ENCODE measurements at regions of chr15 and their contacts with region 1.

Region 1: DNA sequence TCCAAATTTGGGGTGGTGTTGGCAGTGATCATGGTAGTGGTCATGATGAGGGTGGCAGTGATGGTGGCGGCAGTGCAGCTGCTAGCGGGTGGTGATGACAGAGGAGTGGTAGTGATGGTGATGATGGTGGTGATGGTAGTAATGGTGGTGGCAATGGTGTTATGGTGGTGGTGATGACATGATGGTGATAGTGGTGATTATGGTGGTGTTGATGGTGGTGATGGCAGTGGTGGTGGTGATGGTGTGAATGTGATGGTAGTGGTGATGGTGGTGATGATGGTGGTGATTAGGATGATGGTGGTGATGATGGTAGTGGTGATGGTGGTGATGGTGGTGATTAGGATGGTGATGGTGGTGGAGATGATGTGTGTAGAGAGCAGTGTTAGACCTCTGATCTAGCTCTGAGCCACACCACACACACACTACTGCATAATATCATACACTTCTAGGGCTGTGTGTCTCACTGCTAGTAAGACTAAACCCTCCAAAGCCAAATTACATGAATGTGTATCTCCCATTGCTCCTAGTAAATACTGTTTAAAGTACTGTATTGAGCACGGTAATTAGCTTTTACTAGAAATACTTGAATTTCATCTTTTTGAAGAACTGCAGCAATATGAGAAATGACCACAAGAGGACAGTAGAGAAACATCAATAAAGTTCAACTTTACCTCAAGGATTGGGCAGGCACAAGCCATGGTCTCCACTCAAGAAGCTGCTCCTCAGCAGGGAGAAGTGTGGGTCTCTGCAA is 28.8 kb downstream of the TMED3 start:
- DNase-seq: no peak
- H3K4me3 Mint-ChIP-seq: no peak overlapping the region
- H3K27ac Mint-ChIP-seq: no peak overlapping the region
- H3K4me1 Mint-ChIP-seq: no peaks in the 10 kb centered on the region
- H3K27me3 Mint-ChIP-seq: no peaks in the 10 kb centered on the region

Region 2: GRCh38 chr15:79596051-79596507 is 256.3 kb after region 1 on chr15:
- intact Hi-C with region 1: loop called (anchors 1 kb)
- DNase-seq: peak; percentile 59
- H3K4me3 Mint-ChIP-seq: no peak overlapping the region
- H3K27ac Mint-ChIP-seq: no peak overlapping the region
- H3K4me1 Mint-ChIP-seq: peaks cover 5% of the 10 kb centered on the region
- H3K27me3 Mint-ChIP-seq: peaks cover 18% of the 10 kb centered on the region

Measured in activated T-helper 2 cell treated with anti-CD3 and anti-CD28 coated beads, Interferon-gamma antibody, Interleukin-2, Interleukin-4, amounts not matched to agents 10 μg/mL and 5 μg/mL and 100 μg/mL, durations not matched to agents 14 hours and 24 hours and 36 hours (primary cell).